Naive thymus-derived CD4-positive, alpha-beta T cell (primary cell): ENCODE measurements at regions of chr3 and their contacts with region 1.

Region 1: DNA sequence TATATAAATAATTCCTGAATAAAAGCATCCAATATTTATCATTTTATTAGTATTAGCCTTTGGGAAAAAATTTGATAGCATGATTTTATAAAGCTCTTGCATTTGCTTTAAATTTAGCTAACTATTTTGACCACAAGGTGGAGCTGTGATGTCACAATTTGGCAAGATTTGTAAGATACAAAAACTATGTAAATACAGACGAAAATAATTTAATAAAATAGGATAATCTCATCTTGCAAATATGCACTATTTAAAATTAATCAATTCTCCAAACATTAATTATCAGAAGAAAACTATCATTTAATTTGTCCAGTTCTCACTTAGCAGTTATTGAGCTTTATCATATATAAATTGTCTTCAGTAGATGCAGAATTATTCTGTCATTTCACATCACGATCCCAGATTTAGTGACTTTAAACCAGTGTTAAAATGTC is 95.4 kb downstream of the PLOD2 start:
- DNase-seq: peak in 1 of 9 donors; percentile 7
- ATAC-seq: no peak
- H3K4me3 ChIP-seq: no peak overlapping the region
- H3K4me3 Mint-ChIP-seq: no peak overlapping the region
- H3K27ac ChIP-seq: no peak overlapping the region
- H3K27ac Mint-ChIP-seq: no peak overlapping the region
- H3K4me1 ChIP-seq: no peaks in the 10 kb centered on the region
- H3K4me1 Mint-ChIP-seq: no peaks in the 10 kb centered on the region
- H3K27me3 ChIP-seq: no peaks in the 10 kb centered on the region
- H3K27me3 Mint-ChIP-seq: no peaks in the 10 kb centered on the region

Region 2: GRCh38 chr3:145533696-145534095 is 531.9 kb before region 1 on chr3:
- CTCF ChIA-PET with region 1: no interaction called
- POLR2A ChIA-PET with region 1: no interaction called
- intact Hi-C with region 1: no loop called
- DNase-seq: no peak
- ATAC-seq: no peak
- H3K4me3 ChIP-seq: no peak overlapping the region
- H3K4me3 Mint-ChIP-seq: no peak overlapping the region
- H3K27ac ChIP-seq: no peak overlapping the region
- H3K27ac Mint-ChIP-seq: no peak overlapping the region
- H3K4me1 ChIP-seq: no peaks in the 10 kb centered on the region
- H3K4me1 Mint-ChIP-seq: no peaks in the 10 kb centered on the region
- H3K27me3 ChIP-seq: no peaks in the 10 kb centered on the region
- H3K27me3 Mint-ChIP-seq: no peaks in the 10 kb centered on the region

Region 3: DNA sequence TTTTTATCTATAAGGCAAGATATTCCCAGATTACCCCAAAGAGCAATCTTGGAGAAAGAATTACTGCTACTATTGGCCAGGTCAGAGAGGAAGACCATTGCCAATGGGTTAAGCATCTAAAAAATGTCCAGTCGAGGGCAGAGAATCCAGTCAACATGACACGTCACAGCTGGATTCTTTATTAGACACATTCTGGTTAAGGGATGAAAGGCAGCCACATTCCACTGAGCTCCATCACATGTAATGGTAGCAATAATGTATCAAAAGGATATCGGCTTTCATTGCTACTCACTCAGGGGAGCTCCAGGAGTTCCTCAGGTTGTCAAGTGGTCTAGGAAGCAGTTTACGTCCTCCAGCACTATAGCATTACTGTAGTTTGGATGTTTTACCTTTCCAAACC is 325.7 kb before region 1 on chr3:
- CTCF ChIA-PET with region 1: no interaction called
- POLR2A ChIA-PET with region 1: no interaction called
- intact Hi-C with region 1: no loop called
- DNase-seq: no peak
- ATAC-seq: no peak
- H3K4me3 ChIP-seq: no peak overlapping the region
- H3K4me3 Mint-ChIP-seq: no peak overlapping the region
- H3K27ac ChIP-seq: no peak overlapping the region
- H3K27ac Mint-ChIP-seq: no peak overlapping the region
- H3K4me1 ChIP-seq: no peaks in the 10 kb centered on the region
- H3K4me1 Mint-ChIP-seq: peaks cover 0 to 1% (median 0%) of the 10 kb centered on the region in 7 donors
- H3K27me3 ChIP-seq: no peaks in the 10 kb centered on the region
- H3K27me3 Mint-ChIP-seq: no peaks in the 10 kb centered on the region

Region 4: DNA sequence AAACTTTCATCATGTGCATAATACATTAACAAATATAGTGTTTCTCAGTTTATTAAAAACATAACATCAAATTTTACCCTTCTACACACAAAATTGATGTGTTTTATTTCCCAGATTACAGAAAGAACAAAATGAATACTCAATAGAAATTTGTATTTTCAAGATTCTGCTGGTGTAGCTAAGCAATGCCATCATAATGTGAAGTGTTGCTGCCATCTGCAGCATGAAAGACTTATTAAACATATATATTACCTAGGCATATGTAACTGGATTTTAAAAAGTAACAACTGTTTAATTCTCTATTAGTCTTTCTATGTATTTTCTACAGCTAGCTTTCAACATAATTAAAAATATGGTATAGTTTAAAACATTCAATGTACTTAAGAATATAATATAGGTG is 512.1 kb after region 1 on chr3:
- CTCF ChIA-PET with region 1: interaction called, 10 read pairs
- POLR2A ChIA-PET with region 1: no interaction called
- intact Hi-C with region 1: loop called (anchors 1 kb)
- DNase-seq: peak in 6 of 9 donors; percentile 19 to 46 (median 34)
- ATAC-seq: peak; percentile 67
- H3K4me3 ChIP-seq: no peak overlapping the region
- H3K4me3 Mint-ChIP-seq: no peak overlapping the region
- H3K27ac ChIP-seq: no peak overlapping the region
- H3K27ac Mint-ChIP-seq: no peak overlapping the region
- H3K4me1 ChIP-seq: no peaks in the 10 kb centered on the region
- H3K4me1 Mint-ChIP-seq: peaks cover 0 to 5% (median 0%) of the 10 kb centered on the region in 7 donors
- H3K27me3 ChIP-seq: no peaks in the 10 kb centered on the region
- H3K27me3 Mint-ChIP-seq: peaks cover 0 to 23% (median 3%) of the 10 kb centered on the region in 5 donors

Region 5: DNA sequence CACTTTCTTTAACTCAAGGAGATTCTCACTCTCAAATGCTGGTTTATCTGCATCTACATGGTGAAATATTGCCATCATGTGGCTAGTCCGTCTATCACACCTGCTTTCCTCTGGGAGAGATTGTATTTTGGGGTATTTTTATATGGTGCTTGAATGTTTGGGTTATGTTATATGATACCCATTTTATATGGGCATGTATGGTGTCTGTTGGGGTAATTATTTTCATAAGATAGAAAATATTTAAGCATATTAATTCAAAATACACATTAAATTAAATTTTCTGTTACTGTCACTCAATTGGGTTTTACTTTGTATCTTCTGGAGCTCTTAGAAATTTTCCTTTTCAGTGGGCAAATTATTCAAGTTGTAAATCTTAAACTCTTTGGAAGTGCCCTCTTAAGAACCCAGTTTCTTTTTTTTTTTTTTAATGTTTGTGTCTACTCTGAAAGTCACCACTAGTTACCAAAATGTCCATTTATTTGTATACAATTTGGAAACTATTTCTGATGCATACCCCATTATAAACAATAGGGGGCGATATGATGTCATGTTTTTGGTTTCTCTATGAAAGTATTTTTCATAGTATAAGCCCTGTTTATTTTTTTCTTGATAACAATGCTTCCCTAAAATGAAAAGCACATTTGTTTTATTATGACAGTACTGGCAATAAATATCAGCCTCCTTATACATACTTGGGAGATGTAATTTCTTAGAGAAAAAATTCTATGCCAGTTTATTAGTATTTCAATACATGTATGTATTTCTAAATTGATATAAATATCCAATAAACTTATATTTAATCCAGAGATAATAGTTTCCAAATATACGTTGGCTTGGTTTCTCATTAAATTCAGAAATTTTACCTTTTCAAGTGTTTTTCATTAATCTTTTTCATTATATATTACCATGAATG is 575.6 kb after region 1 on chr3:
- CTCF ChIA-PET with region 1: no interaction called
- POLR2A ChIA-PET with region 1: no interaction called
- intact Hi-C with region 1: loop called (anchors 1 to 5 kb)
- DNase-seq: peak in 2 of 9 donors; percentile 1 to 7
- ATAC-seq: no peak
- H3K4me3 ChIP-seq: no peak overlapping the region
- H3K4me3 Mint-ChIP-seq: no peak overlapping the region
- H3K27ac ChIP-seq: no peak overlapping the region
- H3K27ac Mint-ChIP-seq: no peak overlapping the region
- H3K4me1 ChIP-seq: no peaks in the 10 kb centered on the region
- H3K4me1 Mint-ChIP-seq: no peaks in the 10 kb centered on the region
- H3K27me3 ChIP-seq: no peaks in the 10 kb centered on the region
- H3K27me3 Mint-ChIP-seq: peaks cover 0 to 6% (median 5%) of the 10 kb centered on the region in 5 donors

Region 6: GRCh38 chr3:146796078-146796477 is 730.5 kb after region 1 on chr3:
- CTCF ChIA-PET with region 1: no interaction called
- POLR2A ChIA-PET with region 1: no interaction called
- intact Hi-C with region 1: no loop called
- DNase-seq: no peak
- ATAC-seq: no peak
- H3K4me3 ChIP-seq: no peak overlapping the region
- H3K4me3 Mint-ChIP-seq: no peak overlapping the region
- H3K27ac ChIP-seq: no peak overlapping the region
- H3K27ac Mint-ChIP-seq: no peak overlapping the region
- H3K4me1 ChIP-seq: no peaks in the 10 kb centered on the region
- H3K4me1 Mint-ChIP-seq: no peaks in the 10 kb centered on the region
- H3K27me3 ChIP-seq: no peaks in the 10 kb centered on the region
- H3K27me3 Mint-ChIP-seq: no peaks in the 10 kb centered on the region